Activated CD4-positive, alpha-beta T cell treated with anti-CD3 and anti-CD28 coated beads for 36 hours (primary cell): ENCODE measurements at regions of chr1 and their contacts with region 1.

Region 1: DNA sequence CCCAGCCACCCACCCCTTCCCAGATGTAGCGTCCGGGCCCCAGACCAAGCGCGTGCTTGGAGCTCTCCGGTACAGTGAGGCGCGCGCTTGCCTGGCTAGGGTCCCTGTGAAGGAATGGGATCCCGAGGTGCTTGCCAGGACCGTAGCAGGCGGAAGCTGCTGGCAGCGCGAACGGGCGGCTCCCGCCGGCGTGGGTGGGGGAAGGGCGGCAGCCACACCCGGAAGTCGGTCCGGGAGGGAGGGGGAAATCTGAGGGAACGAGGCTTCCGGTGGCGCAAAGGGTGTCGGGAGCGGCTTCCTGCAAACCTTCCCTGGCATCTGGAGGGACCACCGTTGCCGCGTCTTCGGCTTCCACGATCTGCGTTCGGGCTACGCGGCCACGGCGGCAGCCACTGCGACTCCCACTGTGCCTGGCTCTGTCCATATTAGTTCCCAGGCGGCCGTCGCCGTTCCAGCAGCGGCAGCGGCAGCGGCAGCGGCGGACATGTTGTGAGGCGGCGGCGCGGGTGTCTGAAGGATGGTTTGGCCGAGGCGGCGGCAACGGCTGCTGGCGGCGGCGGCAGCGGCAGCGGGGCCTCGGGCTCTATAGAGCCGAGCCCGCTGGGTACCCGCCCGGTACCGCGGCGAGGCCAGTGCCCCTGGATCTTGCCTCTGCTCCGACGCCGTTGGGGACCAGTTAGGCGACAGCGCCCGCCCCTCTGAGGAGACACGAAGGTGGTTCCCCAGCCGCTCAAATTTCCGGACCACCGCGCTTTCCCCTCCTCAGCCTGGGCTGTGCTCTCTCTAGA is at the start of gene DR1:
- DNase-seq: peak; percentile 96
- ATAC-seq: peak; percentile 78
- H3K4me3 Mint-ChIP-seq: peak within 1 kb of the TSS; percentile 97
- H3K27ac Mint-ChIP-seq: peak within 1 kb of the TSS; percentile 97
- H3K4me1 Mint-ChIP-seq: peaks cover 22% of the 10 kb centered on the region
- H3K27me3 Mint-ChIP-seq: no peaks in the 10 kb centered on the region
- total RNA-seq, gene DR1: 84.8 to 95.3 TPM

Region 2: GRCh38 chr1:91803847-91804545 is 1541.8 kb before region 1 on chr1:
- CTCF ChIA-PET with region 1: no interaction called
- POLR2A ChIA-PET with region 1: no interaction called
- intact Hi-C with region 1: loop called in 1 of 2 experiments (anchors 5 kb)
- DNase-seq: peak; percentile 86
- ATAC-seq: peak; percentile 80
- H3K4me3 Mint-ChIP-seq: peak overlapping the region; percentile 56
- H3K27ac Mint-ChIP-seq: peak overlapping the region; percentile 90
- H3K4me1 Mint-ChIP-seq: peaks cover 39% of the 10 kb centered on the region
- H3K27me3 Mint-ChIP-seq: peaks cover 1% of the 10 kb centered on the region

Region 3: GRCh38 chr1:93042187-93043056 is 303.4 kb before region 1 on chr1:
- CTCF ChIA-PET with region 1: no interaction called
- POLR2A ChIA-PET with region 1: interaction called, 4 read pairs
- intact Hi-C with region 1: loop called in 1 of 2 experiments (anchors 2 kb)
- DNase-seq: peak; percentile 20
- ATAC-seq: peak; percentile 98
- H3K4me3 Mint-ChIP-seq: peak overlapping the region; percentile 56
- H3K27ac Mint-ChIP-seq: peak overlapping the region; percentile 92
- H3K4me1 Mint-ChIP-seq: peaks cover 30% of the 10 kb centered on the region
- H3K27me3 Mint-ChIP-seq: no peaks in the 10 kb centered on the region

Region 4: GRCh38 chr1:93179886-93180722 is 165.7 kb before region 1 on chr1 and contains the start of gene TMED5:
- CTCF ChIA-PET with region 1: no interaction called
- POLR2A ChIA-PET with region 1: no interaction called
- intact Hi-C with region 1: loop called (anchors 1 to 2 kb)
- DNase-seq: peak; percentile 98
- ATAC-seq: peak; percentile 85
- H3K4me3 Mint-ChIP-seq: peak within 1 kb of the TSS; percentile 89
- H3K27ac Mint-ChIP-seq: peak within 1 kb of the TSS; percentile 99
- H3K4me1 Mint-ChIP-seq: peaks cover 41% of the 10 kb centered on the region
- H3K27me3 Mint-ChIP-seq: no peaks in the 10 kb centered on the region
- total RNA-seq, gene TMED5: 32.6 to 33.0 TPM

Region 5: GRCh38 chr1:93607814-93608186 is 262.0 kb after region 1 on chr1:
- CTCF ChIA-PET with region 1: no interaction called
- POLR2A ChIA-PET with region 1: no interaction called
- intact Hi-C with region 1: loop called (anchors 2 to 5 kb)
- DNase-seq: peak; percentile 82
- ATAC-seq: peak; percentile 95
- H3K4me3 Mint-ChIP-seq: no peak overlapping the region
- H3K27ac Mint-ChIP-seq: peak overlapping the region; percentile 63
- H3K4me1 Mint-ChIP-seq: peaks cover 43% of the 10 kb centered on the region
- H3K27me3 Mint-ChIP-seq: peaks cover 16% of the 10 kb centered on the region

Region 6: DNA sequence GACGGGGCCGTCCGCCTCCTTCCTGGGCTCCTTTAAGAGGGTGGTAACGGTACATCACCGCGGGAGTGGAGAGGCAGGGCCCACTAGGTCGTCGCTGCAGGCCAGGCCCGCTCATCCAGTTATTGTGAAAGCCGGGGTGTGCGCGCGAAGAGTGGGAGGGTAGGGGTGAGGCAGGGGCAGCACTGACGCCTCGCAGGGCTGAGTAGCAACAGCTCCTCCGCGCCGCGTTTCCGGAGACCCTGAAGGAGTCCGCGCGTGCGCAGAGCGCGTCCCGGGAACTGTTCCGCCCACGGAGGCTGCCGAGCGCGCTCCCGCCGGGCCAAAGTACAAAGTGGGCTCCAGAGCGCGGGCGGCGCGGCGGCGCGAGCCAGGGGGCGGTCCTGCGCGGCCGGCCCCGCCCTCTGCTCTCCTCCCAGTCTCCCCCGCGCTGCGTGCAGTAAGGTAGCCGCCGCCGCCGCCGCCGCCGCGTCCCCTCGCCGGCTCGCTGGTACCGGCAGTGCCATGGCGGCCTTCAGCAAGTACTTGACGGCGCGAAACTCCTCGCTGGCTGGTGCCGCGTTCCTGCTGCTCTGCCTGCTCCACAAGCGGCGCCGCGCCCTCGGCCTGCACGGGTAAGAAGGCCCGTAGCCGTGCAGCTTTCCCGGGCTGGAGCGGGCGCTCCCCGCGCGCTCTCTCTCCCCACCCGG is 1072.3 kb after region 1 on chr1 and contains the start of gene ABCD3:
- CTCF ChIA-PET with region 1: no interaction called
- POLR2A ChIA-PET with region 1: no interaction called
- intact Hi-C with region 1: loop called in 1 of 2 experiments (anchors 10 kb)
- DNase-seq: peak; percentile 98
- ATAC-seq: peak; percentile 91
- H3K4me3 Mint-ChIP-seq: no peak within 1 kb of the TSS
- H3K27ac Mint-ChIP-seq: peak within 1 kb of the TSS; percentile 87
- H3K4me1 Mint-ChIP-seq: peaks cover 29% of the 10 kb centered on the region
- H3K27me3 Mint-ChIP-seq: peaks cover 6% of the 10 kb centered on the region
- total RNA-seq, gene ABCD3: 46.1 to 67.1 TPM